CD8-positive, alpha-beta T cell (primary cell): ENCODE measurements at regions of chr13 and their contacts with region 1.

Region 1: DNA sequence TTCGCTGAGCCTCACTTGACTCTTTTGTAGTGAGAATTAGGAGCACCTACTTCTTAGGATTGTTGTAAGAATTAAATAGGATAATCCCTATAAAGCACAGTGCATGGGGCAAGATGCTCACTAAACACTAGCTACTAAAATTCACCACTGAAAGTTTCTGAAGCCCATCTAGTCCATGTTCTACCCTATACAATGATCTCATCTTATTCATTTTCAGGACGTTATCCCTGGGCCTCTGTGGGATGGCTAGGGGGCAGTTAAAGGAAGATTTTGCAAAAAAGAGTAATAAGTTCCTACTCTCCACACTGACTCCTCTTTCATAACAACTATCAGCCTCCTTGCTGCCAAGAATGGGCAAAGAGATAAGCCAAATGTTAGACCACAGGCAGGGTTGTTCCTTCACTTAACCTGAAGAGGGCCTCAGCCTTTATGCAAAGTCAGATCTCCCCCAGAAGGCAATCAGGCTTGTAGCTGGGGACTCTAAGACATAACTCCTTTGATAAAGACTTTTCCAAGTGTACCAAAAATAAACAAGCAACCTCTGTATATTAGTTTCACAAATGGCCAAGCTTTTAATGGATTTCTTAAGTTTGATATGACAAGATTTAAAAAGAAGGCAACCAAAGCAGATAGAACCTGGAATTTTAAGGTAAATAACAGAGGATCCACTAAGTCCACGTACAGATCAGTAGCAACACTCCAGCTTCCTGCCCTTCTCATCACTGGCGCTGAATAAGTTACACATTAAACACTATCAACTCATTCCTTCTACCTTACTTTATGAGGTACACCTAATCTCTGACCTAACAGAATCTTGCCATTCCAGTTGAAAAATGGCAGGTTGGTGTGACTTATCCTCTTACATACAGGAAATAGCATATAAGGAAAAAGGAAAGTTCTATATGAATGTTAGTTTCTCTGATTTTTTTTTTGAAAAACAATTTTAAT is 44.4 kb downstream of the ELF1 start:
- DNase-seq: peak in 5 of 9 experiments; percentile 34 to 82 (median 55)
- ATAC-seq: peak; percentile 84
- H3K4me3 ChIP-seq: peak overlapping the region in 1 of 2 experiments; percentile 8
- H3K4me3 Mint-ChIP-seq: peak overlapping the region; percentile 63
- H3K27ac ChIP-seq: peak overlapping the region in 1 of 2 experiments; percentile 50
- H3K27ac Mint-ChIP-seq: peak overlapping the region; percentile 68
- H3K4me1 ChIP-seq: peaks cover 82% of the 10 kb centered on the region
- H3K4me1 Mint-ChIP-seq: peaks cover 93% of the 10 kb centered on the region
- H3K27me3 ChIP-seq: no peaks in the 10 kb centered on the region
- H3K27me3 Mint-ChIP-seq: no peaks in the 10 kb centered on the region
- CTCF ChIP-seq: peak; percentile 66

Region 2: DNA sequence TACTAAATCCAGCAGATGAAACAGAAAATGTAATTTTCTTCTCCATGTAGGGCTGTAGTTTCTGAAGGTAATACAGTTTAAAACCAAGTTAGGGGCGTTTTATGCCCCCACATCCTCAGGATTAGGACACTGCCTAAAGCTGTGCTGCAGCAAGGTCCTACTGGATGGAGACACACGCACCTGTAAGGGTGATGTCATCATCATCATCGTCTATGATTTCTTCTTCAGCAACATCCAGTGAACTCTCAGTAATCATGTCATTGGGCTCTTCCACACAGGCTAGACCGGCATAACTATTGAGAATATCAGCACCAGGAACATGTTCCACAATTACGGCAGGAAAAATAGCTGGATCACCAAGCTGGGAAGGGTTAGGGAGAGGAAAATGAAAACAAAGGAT is 16.1 kb before region 1 on chr13:
- CTCF ChIA-PET with region 1: interaction called, 4 read pairs
- POLR2A ChIA-PET with region 1: no interaction called
- intact Hi-C with region 1: loop called in 1 of 2 experiments (anchors 1 kb)
- DNase-seq: no peak
- ATAC-seq: no peak
- H3K4me3 ChIP-seq: no peak overlapping the region
- H3K4me3 Mint-ChIP-seq: no peak overlapping the region
- H3K27ac ChIP-seq: no peak overlapping the region
- H3K27ac Mint-ChIP-seq: peak overlapping the region; percentile 62
- H3K4me1 ChIP-seq: peaks cover 34% of the 10 kb centered on the region
- H3K4me1 Mint-ChIP-seq: peaks cover 64% of the 10 kb centered on the region
- H3K27me3 ChIP-seq: no peaks in the 10 kb centered on the region
- H3K27me3 Mint-ChIP-seq: no peaks in the 10 kb centered on the region
- CTCF ChIP-seq: no peak

Region 3: GRCh38 chr13:40992678-40993518 is 18.2 kb after region 1 on chr13:
- CTCF ChIA-PET with region 1: interaction called, 37 read pairs
- POLR2A ChIA-PET with region 1: interaction called, 5 read pairs
- intact Hi-C with region 1: loop called (anchors 1 to 2 kb)
- DNase-seq: peak in 2 of 9 experiments; percentile 47 to 66
- ATAC-seq: peak; percentile 52
- H3K4me3 ChIP-seq: no peak overlapping the region
- H3K4me3 Mint-ChIP-seq: peak overlapping the region; percentile 43
- H3K27ac ChIP-seq: peak overlapping the region in 1 of 2 experiments; percentile 17
- H3K27ac Mint-ChIP-seq: peak overlapping the region; percentile 86
- H3K4me1 ChIP-seq: peaks cover 88% of the 10 kb centered on the region
- H3K4me1 Mint-ChIP-seq: peaks cover 83% of the 10 kb centered on the region
- H3K27me3 ChIP-seq: no peaks in the 10 kb centered on the region
- H3K27me3 Mint-ChIP-seq: no peaks in the 10 kb centered on the region
- CTCF ChIP-seq: peak; percentile 47

Region 4: GRCh38 chr13:41004875-41005693 is 30.4 kb after region 1 on chr13:
- CTCF ChIA-PET with region 1: interaction called, 13 read pairs
- POLR2A ChIA-PET with region 1: interaction called, 5 read pairs
- intact Hi-C with region 1: no loop called
- DNase-seq: peak in 2 of 9 experiments; percentile 62 to 80
- ATAC-seq: peak; percentile 83
- H3K4me3 ChIP-seq: peak overlapping the region; percentile 6 to 13
- H3K4me3 Mint-ChIP-seq: peak overlapping the region; percentile 73
- H3K27ac ChIP-seq: peak overlapping the region; percentile 18 to 76
- H3K27ac Mint-ChIP-seq: peak overlapping the region; percentile 90
- H3K4me1 ChIP-seq: peaks cover 78% of the 10 kb centered on the region
- H3K4me1 Mint-ChIP-seq: peaks cover 79% of the 10 kb centered on the region
- H3K27me3 ChIP-seq: no peaks in the 10 kb centered on the region
- H3K27me3 Mint-ChIP-seq: no peaks in the 10 kb centered on the region
- CTCF ChIP-seq: no peak

Region 5: DNA sequence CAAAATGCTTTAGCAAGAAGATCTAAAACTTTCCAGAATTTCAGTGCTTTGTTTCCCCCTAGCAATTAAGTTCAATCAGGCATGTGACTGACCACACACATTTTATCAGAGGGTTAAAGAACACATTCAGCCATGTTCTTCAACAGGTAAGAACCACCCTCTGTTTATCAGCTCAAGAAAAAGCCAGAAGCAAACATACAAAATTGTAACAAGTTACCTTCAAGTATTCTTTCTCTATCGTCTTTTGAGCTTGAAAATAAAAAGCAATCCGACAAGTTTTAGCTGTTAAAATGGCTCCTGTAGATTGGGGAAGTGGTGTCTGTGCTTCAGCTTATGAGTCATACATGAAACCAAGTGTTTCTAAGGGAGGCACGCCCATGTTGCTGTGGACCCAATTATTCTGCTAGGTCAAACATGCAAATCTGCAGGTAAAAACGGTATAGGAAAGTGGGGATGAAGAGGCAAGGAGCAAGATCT is 44.3 kb after region 1 on chr13 and contains the start of gene ELF1:
- CTCF ChIA-PET with region 1: interaction called, 14 read pairs
- POLR2A ChIA-PET with region 1: interaction called, 5 read pairs
- intact Hi-C with region 1: loop called (anchors 1 to 2 kb)
- DNase-seq: peak in 8 of 9 experiments; percentile 28 to 89 (median 63)
- ATAC-seq: peak; percentile 88
- H3K4me3 ChIP-seq: peak within 1 kb of the TSS; percentile 56 to 68
- H3K4me3 Mint-ChIP-seq: peak within 1 kb of the TSS; percentile 88
- H3K27ac ChIP-seq: peak within 1 kb of the TSS; percentile 91 to 95
- H3K27ac Mint-ChIP-seq: peak within 1 kb of the TSS; percentile 97
- H3K4me1 ChIP-seq: peaks cover 25% of the 10 kb centered on the region
- H3K4me1 Mint-ChIP-seq: peaks cover 47% of the 10 kb centered on the region
- H3K27me3 ChIP-seq: no peaks in the 10 kb centered on the region
- H3K27me3 Mint-ChIP-seq: no peaks in the 10 kb centered on the region
- CTCF ChIP-seq: no peak
- total RNA-seq, gene ELF1: 308 to 313 TPM